Activated CD8-positive, alpha-beta memory T cell treated with anti-CD3 and anti-CD28 coated beads, Interleukin-2, amount 10 ng/mL, durations not matched to agents 7 days and 5 days (primary cell): ENCODE measurements at regions of chr20 and their contacts with region 1.

Region 1: DNA sequence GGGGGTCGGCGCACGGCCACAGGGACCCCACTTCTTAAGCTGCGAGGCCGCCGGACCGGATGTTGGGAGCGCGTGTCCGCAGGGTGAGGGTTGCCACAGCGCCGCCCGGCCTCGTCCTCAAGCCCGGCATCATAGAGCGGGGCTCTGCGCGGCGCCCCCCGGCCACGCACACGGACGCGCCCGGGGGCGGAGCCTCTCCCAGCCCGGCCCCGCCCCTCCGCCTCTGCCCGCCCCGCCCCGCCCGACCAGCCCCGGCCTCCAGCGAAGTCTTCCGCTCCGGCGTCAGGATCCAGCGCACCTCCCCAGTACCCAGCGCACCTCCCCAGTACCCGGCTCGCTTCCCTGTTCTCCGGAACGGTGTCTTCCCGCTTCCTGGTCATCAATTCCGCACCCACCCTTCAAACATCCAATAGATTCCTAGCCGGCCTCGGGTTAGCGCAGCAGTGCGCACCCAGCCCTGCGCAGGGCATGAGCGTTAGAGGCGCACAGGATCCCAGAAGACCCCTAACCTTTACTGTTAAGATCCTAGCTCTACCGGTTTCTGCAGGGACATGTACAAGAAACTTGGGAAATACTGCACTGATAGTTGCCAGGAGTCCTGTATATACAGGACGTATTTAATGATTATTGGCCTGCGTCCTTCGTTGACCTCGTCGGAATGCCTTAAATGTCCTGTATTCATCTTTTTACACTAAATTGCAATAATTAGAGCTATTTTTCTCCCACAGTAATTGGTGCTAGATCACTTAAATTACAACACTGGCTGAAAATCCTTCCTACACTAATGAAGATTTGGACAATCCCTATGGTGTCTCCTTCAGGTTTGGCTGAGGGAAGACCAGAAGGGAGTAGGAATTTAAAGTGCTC is 535 bp upstream of the DNAAF9 start:
- DNase-seq: peak; percentile 81
- ATAC-seq: peak; percentile 75
- H3K4me3 Mint-ChIP-seq: peak overlapping the region; percentile 84
- H3K27ac Mint-ChIP-seq: peak overlapping the region; percentile 90
- H3K4me1 Mint-ChIP-seq: peaks cover 33% of the 10 kb centered on the region
- H3K27me3 Mint-ChIP-seq: peaks cover 13% of the 10 kb centered on the region

Region 2: GRCh38 chr20:3227506-3227905 is 180.5 kb before region 1 on chr20:
- CTCF ChIA-PET with region 1: no interaction called
- DNase-seq: no peak
- ATAC-seq: no peak
- H3K4me3 Mint-ChIP-seq: no peak overlapping the region
- H3K27ac Mint-ChIP-seq: no peak overlapping the region
- H3K4me1 Mint-ChIP-seq: peaks cover 6% of the 10 kb centered on the region
- H3K27me3 Mint-ChIP-seq: no peaks in the 10 kb centered on the region

Region 3: GRCh38 chr20:3312940-3313682 is 94.9 kb before region 1 on chr20:
- CTCF ChIA-PET with region 1: no interaction called
- DNase-seq: no peak
- ATAC-seq: no peak
- H3K4me3 Mint-ChIP-seq: no peak overlapping the region
- H3K27ac Mint-ChIP-seq: no peak overlapping the region
- H3K4me1 Mint-ChIP-seq: no peaks in the 10 kb centered on the region
- H3K27me3 Mint-ChIP-seq: no peaks in the 10 kb centered on the region

Region 4: DNA sequence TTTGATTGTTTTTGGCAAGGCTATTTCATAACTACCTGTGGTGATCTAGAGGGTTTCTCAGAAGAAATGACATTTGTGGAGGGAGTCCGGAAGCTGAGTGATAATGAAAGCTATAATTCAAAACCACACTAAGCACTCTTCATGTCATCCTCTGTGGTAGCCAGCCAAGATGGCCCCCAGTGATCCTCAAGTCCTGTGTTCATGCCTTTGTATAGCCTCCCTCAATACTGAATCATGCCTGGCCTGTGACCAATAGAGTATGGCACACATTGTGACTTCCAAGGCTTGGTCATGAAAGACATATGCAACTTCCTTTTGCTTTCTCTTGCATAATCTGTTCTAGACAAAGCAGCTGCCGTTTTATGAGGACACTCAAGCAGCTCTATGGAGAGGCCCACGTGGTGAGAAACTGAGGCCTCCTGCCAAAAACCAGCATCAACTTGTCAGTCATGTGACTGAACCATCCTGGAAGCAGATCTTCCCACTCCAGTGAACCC is 12.3 kb after region 1 on chr20:
- CTCF ChIA-PET with region 1: interaction called, 38 read pairs
- DNase-seq: peak; percentile 85
- ATAC-seq: peak; percentile 100
- H3K4me3 Mint-ChIP-seq: peak overlapping the region; percentile 13
- H3K27ac Mint-ChIP-seq: peak overlapping the region; percentile 90
- H3K4me1 Mint-ChIP-seq: peaks cover 19% of the 10 kb centered on the region
- H3K27me3 Mint-ChIP-seq: peaks cover 13% of the 10 kb centered on the region